AG04449 (cell line): ENCODE measurements at regions of chr3 and their contacts with region 1.

Region 1: GRCh38 chr3:52001443-52001974 is 5.8 kb upstream of the RPL29 start:
- DNase-seq: no peak
- H3K4me3 ChIP-seq: no peak overlapping the region
- CTCF ChIP-seq: peak; percentile 96

Region 2: GRCh38 chr3:51941798-51942602 is 59.5 kb before region 1 on chr3 and contains the starts of genes PARP3 and RRP9:
- CTCF ChIA-PET with region 1: interaction called, 14 read pairs
- POLR2A ChIA-PET with region 1: no interaction called
- DNase-seq: peak; percentile 99
- H3K4me3 ChIP-seq: peak within 1 kb of the TSS; percentile 81
- CTCF ChIP-seq: peak; percentile 99

Region 3: GRCh38 chr3:52046186-52046913 is 44.8 kb after region 1 on chr3:
- CTCF ChIA-PET with region 1: interaction called, 160 read pairs
- POLR2A ChIA-PET with region 1: interaction called, 5 read pairs
- DNase-seq: peak; percentile 98
- H3K4me3 ChIP-seq: peak overlapping the region; percentile 32; the same call in 1 of the 2 replicates
- CTCF ChIP-seq: no peak

Region 4: GRCh38 chr3:52099001-52099401 is 97.5 kb after region 1 on chr3:
- CTCF ChIA-PET with region 1: interaction called, 13 read pairs
- POLR2A ChIA-PET with region 1: no interaction called
- DNase-seq: no peak
- H3K4me3 ChIP-seq: no peak overlapping the region
- CTCF ChIP-seq: no peak

Region 5: DNA sequence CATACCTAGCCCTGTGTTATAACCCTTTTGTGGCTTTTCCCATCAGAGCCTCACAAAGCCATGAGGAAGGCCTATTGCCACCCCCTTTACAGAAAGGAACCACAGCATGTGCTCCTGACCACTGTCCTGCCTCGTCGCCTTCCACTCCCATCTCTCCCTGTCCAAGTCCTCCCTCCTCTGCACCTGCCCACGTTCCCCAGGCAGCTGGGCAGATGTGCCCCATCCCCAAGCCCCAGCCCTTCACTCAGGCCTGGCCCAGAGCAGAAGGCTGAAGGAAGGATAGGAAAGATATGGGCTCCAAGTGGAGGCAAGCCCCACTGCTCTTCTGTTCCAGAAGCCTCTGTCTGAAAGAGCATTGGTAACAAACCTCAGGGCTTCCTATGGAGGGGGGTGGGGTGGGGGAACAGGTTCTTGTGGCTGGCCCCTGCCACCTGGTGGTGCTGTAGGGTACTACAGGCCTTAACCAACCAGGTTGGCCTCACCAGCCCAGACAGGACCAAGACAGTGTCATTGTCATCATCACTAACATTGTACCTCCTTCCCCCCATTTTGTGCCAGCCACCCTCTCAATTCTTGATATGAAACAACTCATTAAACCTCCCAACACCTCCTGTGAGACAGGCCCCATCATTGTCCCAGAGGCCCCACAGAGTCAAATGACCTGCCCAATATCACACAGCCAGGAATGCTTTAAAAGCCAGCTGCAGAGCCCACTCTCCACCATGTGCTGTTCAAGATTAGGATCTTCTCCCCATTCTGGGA is 142.7 kb after region 1 on chr3:
- CTCF ChIA-PET with region 1: interaction called, 725 read pairs
- POLR2A ChIA-PET with region 1: interaction called, 4 read pairs
- DNase-seq: peak; percentile 41
- H3K4me3 ChIP-seq: no peak overlapping the region
- CTCF ChIP-seq: peak; percentile 95

Region 6: DNA sequence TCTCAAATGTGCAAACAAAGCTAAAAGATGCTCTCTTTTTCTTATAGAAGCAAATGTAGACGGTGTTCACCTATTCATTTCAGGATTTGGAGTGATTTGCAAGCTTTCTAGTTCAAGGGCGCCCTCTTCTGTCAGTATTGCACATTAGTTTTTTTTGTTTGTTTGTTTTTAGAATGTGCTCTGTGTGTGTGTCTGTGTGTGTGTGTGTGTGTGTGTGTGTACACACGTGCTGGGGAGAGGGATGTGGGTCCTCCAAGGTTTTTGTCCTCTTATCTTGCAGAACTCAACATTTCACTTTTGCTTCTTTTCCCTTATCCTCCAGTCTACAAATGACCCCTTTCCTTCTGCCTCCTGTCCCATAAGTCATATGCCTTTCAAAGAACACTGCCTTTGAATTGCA is 338.1 kb after region 1 on chr3:
- CTCF ChIA-PET with region 1: interaction called, 34 read pairs
- POLR2A ChIA-PET with region 1: no interaction called
- DNase-seq: peak; percentile 57
- H3K4me3 ChIP-seq: no peak overlapping the region
- CTCF ChIP-seq: peak; percentile 51

Region 7: GRCh38 chr3:52529376-52530333 is 528.1 kb after region 1 on chr3:
- CTCF ChIA-PET with region 1: no interaction called
- POLR2A ChIA-PET with region 1: no interaction called
- DNase-seq: no peak
- H3K4me3 ChIP-seq: no peak overlapping the region
- CTCF ChIP-seq: no peak